Activated T-helper 1 cell treated with anti-CD3 and anti-CD28 coated beads, Interleukin-12 subunit alpha, Interleukin-12 subunit beta, Interleukin-2, Interleukin-4 antibody, amounts not matched to agents 30 ng/mL and 10 ng/mL and 1 ng/mL, durations not matched to agents 14 hours and 24 hours and 36 hours (primary cell): ENCODE measurements at regions of chr10 and their contacts with region 1.

Region 1: DNA sequence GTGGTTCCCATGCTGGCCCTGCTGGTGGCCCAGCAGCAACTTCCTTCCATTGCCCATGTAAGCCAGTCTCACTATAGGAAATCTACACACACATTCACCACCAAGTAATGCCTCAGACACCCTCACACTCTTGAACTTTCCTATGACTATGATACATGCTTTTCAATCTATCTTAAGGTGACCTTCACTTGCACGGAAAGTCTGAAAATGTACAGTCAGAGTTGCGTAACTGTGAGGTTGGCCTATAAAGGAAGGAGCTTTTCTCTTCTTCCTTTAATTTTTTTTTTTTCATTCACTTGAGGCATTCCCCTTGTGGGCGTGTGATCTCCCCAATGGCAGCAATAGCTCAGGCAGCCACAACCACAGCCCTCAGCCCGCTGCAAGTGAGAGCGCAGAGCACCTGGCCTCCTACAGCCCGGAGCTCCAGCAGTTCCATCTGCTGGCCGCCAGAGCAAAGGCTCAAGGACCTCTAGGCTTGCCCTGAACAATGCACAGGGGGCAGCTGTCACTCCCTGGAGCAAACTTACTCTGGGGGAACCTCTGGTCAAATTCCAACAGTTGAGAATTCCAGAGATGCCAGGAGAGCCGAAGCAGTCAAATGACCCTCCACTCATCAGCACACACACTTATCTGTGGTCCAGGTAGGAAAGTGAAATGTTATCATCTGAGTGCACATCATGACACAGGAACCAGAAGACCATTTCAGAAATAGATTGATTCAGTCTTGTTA is 123.1 kb upstream of the ADO start:
- DNase-seq: peak; percentile 80
- H3K4me3 Mint-ChIP-seq: peak overlapping the region; percentile 69
- H3K27ac Mint-ChIP-seq: peak overlapping the region; percentile 95
- H3K4me1 Mint-ChIP-seq: peaks cover 77% of the 10 kb centered on the region
- H3K27me3 Mint-ChIP-seq: no peaks in the 10 kb centered on the region

Region 2: GRCh38 chr10:62528441-62528840 is 152.9 kb before region 1 on chr10:
- intact Hi-C with region 1: loop called (anchors 1 kb)
- DNase-seq: no peak
- H3K4me3 Mint-ChIP-seq: no peak overlapping the region
- H3K27ac Mint-ChIP-seq: peak overlapping the region; percentile 1
- H3K4me1 Mint-ChIP-seq: peaks cover 33% of the 10 kb centered on the region
- H3K27me3 Mint-ChIP-seq: peaks cover 9% of the 10 kb centered on the region

Region 3: DNA sequence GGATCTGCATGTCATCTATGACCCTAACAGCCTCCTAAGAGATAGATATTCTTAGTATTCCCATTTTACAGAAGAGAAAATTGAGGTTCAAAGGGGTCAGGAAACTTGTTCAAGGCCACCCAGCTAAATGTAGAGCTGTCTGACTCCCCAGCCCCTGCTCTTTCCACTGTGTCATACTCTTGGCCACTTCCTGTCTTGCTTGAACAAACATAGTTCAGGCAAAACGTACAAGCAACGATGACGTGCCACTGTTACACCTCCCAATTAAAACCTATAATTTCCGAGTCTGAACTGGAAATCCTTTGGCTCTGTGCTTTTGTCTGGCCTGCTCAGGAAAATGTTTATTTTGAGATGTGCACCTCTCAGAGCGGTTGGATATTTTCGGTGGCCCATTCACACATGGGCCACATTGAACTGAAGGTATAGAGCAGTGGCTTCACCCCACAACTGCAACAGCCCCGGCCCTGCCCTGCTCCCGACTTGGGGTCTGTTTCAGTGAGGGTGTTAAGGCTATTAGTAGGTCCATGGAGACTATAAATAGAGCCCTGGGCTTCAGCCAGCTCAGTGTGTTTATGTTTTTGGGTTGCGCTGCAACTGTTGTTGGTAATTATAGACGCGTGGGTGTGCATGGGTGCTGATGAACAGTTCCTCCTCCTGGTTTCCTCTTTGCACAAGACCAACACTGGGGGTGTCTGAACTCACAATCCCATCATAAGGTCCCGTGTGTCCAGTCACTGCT is 49.1 kb before region 1 on chr10:
- intact Hi-C with region 1: loop called (anchors 1 kb)
- DNase-seq: peak; percentile 59
- H3K4me3 Mint-ChIP-seq: peak overlapping the region; percentile 42
- H3K27ac Mint-ChIP-seq: peak overlapping the region; percentile 95
- H3K4me1 Mint-ChIP-seq: peaks cover 29% of the 10 kb centered on the region
- H3K27me3 Mint-ChIP-seq: no peaks in the 10 kb centered on the region

Region 4: DNA sequence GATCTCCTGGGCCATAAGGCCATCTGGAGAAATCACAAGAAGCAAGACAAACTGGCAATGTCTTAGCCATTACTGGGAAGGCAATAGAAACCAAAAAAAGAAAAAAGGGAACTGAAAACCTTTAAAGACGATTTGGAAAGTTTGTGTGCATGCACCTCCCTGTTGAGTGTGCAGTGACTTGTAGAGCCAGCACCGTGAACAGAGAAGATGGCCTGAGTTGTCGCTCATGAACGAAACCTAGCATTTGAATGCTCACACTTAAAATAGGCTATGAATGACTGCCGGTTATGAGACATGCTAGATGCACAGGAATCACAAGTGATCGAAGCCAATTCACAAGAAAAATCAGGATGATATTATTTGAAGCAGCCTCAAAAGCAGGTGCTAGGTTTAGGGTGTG is 28.1 kb before region 1 on chr10:
- intact Hi-C with region 1: loop called (anchors 2 kb)
- DNase-seq: no peak
- H3K4me3 Mint-ChIP-seq: no peak overlapping the region
- H3K27ac Mint-ChIP-seq: peak overlapping the region; percentile 6
- H3K4me1 Mint-ChIP-seq: peaks cover 50% of the 10 kb centered on the region
- H3K27me3 Mint-ChIP-seq: no peaks in the 10 kb centered on the region

Region 5: GRCh38 chr10:62666275-62666674 is 15.1 kb before region 1 on chr10:
- intact Hi-C with region 1: no loop called
- DNase-seq: no peak
- H3K4me3 Mint-ChIP-seq: no peak overlapping the region
- H3K27ac Mint-ChIP-seq: no peak overlapping the region
- H3K4me1 Mint-ChIP-seq: peaks cover 37% of the 10 kb centered on the region
- H3K27me3 Mint-ChIP-seq: peaks cover 3% of the 10 kb centered on the region

Region 6: GRCh38 chr10:62779487-62780248 is 98.3 kb after region 1 on chr10:
- intact Hi-C with region 1: loop called (anchors 1 kb)
- DNase-seq: peak; percentile 48
- H3K4me3 Mint-ChIP-seq: peak overlapping the region; percentile 27
- H3K27ac Mint-ChIP-seq: peak overlapping the region; percentile 76
- H3K4me1 Mint-ChIP-seq: peaks cover 45% of the 10 kb centered on the region
- H3K27me3 Mint-ChIP-seq: peaks cover 19% of the 10 kb centered on the region

Region 7: DNA sequence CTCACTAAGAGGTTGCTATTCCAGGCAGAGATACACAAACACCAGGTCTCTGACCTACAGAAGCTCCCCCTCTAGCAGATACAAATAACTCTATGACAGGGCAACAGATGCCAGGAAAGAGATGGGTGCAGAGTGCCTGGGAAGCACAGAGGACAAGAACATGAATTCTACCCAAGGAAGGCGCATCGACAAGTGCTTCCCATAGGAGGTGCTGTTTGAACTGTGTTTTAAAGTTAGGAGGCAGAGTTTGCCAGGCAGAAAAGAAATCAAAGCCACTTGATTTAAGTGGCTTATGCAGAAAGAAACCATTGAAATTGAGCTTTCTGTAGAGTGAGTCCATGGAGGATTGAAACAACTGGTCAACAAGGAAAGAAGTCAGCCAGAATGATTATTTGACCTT is 170.1 kb after region 1 on chr10:
- intact Hi-C with region 1: loop called (anchors 1 kb)
- DNase-seq: no peak
- H3K4me3 Mint-ChIP-seq: no peak overlapping the region
- H3K27ac Mint-ChIP-seq: peak overlapping the region; percentile 9
- H3K4me1 Mint-ChIP-seq: peaks cover 51% of the 10 kb centered on the region
- H3K27me3 Mint-ChIP-seq: peaks cover 5% of the 10 kb centered on the region

Region 8: DNA sequence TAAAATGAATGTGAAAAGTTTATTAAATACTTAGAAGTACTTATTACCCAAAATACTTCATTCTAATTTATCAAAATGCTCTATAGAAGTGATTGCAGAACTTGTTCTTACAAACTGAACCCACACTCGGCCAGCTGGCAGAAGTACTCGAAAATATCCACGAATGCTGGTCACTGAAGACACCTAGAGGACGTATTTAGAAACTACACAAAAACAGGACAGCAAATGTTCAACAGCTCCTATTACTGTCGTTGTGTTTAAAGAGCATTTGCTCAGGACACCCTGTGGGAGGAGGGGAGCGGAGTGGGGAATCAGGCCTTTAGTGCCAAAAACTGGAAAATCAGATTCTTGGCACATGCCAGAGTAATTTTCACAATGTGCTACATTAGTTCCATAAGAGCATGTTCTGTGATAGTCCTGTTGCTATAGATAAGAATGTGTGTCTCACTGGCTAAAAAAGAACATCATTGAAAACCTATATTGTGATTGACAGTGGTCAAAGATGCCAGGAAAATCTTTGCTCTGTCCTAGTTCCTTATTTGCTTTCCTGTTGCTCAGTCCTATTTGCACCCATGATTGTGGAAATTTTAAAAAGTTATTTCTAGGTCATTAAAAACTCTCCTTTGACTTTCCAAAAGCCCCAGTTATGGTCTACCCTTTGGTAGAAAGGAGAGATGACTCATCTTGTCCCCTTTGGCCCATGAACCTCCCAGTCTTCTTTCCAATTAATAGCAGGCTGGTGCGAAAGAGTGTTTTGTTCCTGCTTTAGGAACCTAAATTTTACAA is 402.7 kb after region 1 on chr10:
- intact Hi-C with region 1: loop called (anchors 1 kb)
- DNase-seq: peak; percentile 14
- H3K4me3 Mint-ChIP-seq: no peak overlapping the region
- H3K27ac Mint-ChIP-seq: no peak overlapping the region
- H3K4me1 Mint-ChIP-seq: peaks cover 12% of the 10 kb centered on the region
- H3K27me3 Mint-ChIP-seq: peaks cover 28% of the 10 kb centered on the region